ENCODE measurements at regions of chr3 and their contacts with region 1.

Region 1: GRCh38 chr3:122092460-122093165 is 37.5 kb downstream of the CD86 start:
- DNase-seq: peak; percentile 63
- H3K4me3 Mint-ChIP-seq: no peak overlapping the region
- H3K27ac Mint-ChIP-seq: peak overlapping the region; percentile 83
- H3K4me1 Mint-ChIP-seq: peaks cover 18% of the 10 kb centered on the region
- H3K27me3 Mint-ChIP-seq: no peaks in the 10 kb centered on the region

Region 2: DNA sequence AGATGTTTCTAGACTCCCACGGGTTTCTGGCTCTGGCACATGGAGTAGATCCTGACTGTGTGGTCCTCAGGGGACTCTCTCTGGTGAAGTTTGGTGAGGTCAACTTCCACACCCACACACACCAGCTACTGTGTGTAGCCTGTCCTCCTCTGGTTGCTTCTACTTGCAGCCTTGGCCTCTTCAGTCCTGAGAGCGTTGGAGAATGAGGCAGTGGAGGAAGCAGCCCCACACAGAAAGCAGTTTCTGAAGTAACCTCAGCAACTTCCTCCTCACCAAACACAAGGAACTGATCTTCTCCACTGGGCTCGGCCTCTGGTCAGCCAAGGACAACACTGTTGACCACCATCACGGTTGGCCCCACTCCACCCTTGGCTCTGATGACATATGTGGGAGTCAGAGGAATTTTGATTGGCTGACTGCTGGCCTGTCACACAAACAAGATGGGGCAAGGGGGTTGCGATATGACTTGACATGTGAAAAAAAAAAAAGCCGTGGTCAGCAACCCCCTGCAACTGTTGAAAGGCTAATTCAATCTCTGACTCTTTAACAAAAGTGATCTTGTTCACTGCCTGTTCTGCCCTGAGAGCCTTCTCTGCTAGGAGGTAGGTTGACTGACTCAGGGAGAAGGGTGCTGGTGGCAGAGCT is 17.9 kb before region 1 on chr3:
- CTCF ChIA-PET with region 1: interaction called, 22 read pairs
- DNase-seq: peak; percentile 36
- H3K4me3 Mint-ChIP-seq: no peak overlapping the region
- H3K27ac Mint-ChIP-seq: peak overlapping the region; percentile 81
- H3K4me1 Mint-ChIP-seq: peaks cover 41% of the 10 kb centered on the region
- H3K27me3 Mint-ChIP-seq: peaks cover 15% of the 10 kb centered on the region

Measured in activated naive CD4-positive, alpha-beta T cell treated with anti-CD3 and anti-CD28 coated beads, Interleukin-2, amount 10 ng/mL, durations not matched to agents 7 days and 5 days (primary cell).